SK-N-SH (cell line): ENCODE measurements at regions of chr3 and their contacts with region 1.

Region 1: GRCh38 chr3:50370594-50370993 is 11.3 kb upstream of the TMEM115 start:
- DNase-seq: peak; percentile 78
- H3K4me3 ChIP-seq: no peak overlapping the region
- H3K27ac ChIP-seq: peak overlapping the region in 1 of 2 experiments; percentile 56; a peak in 2 of 4 replicates
- H3K4me1 ChIP-seq: peaks cover 0 to 78% of the 10 kb centered on the region in 2 experiments; a peak in 2 of 4 replicates
- H3K27me3 ChIP-seq: no peaks in the 10 kb centered on the region
- CTCF ChIP-seq: peak; percentile 31
- EP300 ChIP-seq: no peak
- RAD21 ChIP-seq: peak; percentile 72

Region 2: DNA sequence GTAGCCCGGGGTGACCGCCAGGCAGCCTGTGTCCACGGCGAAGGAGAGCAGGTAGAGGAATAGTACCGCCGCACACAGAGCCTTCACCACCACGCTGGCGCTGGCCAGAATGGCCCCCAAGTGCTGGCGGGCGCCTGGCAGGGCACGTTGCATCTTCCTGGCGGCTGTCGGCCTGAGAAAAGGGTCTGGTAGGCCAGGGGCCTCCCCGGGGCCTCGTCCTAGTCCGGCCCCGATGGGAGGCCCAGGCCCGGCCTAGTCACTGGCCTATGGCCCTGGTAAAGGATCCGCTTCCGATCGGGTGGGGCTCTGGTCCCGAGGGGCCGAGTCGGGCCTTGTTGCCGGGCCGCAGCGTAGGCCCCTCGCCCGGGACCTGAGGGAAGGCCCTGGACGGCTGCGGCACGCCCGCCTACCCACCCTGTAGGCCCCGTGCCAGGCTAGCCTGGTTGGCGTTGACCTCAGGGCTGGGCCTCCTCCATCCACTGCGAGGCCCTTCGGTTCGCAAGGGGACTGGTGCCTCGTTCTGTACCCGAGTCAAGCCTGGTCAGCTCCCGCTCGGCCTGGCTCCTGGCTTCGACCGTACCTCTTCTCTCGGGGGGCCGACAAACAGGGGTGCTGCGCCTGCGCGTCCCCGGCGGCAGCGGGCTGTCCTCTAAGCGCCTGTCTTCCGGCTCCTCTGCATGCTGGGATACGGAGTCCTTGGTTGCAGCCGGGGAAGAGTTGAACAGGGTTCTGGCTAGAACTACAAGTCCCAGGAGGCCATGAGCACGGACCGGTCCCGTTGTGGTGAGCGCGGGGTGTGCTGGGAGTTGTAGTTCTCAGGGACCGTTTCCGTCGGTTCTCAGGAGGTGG is 11.5 kb before region 1 on chr3 and contains the start of gene TMEM115:
- CTCF ChIA-PET with region 1: interaction called, 10 read pairs
- POLR2A ChIA-PET with region 1: interaction called, 7 read pairs
- DNase-seq: peak; percentile 98
- H3K4me3 ChIP-seq: peak within 1 kb of the TSS; percentile 77 to 95
- H3K27ac ChIP-seq: peak within 1 kb of the TSS; percentile 60 to 84; a peak in 3 of 4 replicates
- H3K4me1 ChIP-seq: peaks cover 8 to 49% of the 10 kb centered on the region in 2 experiments; a peak in 2 of 4 replicates
- H3K27me3 ChIP-seq: no peaks in the 10 kb centered on the region
- CTCF ChIP-seq: no peak
- EP300 ChIP-seq: no peak; a peak in 1 of 4 replicates
- RAD21 ChIP-seq: no peak
- polyA plus RNA-seq, gene TMEM115: 47.8 and 49.2 TPM in 2 replicates

Region 3: GRCh38 chr3:50381383-50381782 is 10.8 kb after region 1 on chr3:
- CTCF ChIA-PET with region 1: interaction called, 70 read pairs
- POLR2A ChIA-PET with region 1: interaction called, 28 read pairs
- DNase-seq: peak; percentile 90
- H3K4me3 ChIP-seq: peak overlapping the region in 1 of 2 experiments; percentile 41; a peak in 1 of 4 replicates
- H3K27ac ChIP-seq: peak overlapping the region in 1 of 2 experiments; percentile 100; a peak in 2 of 4 replicates
- H3K4me1 ChIP-seq: peaks cover 0 to 98% of the 10 kb centered on the region in 2 experiments; a peak in 2 of 4 replicates
- H3K27me3 ChIP-seq: no peaks in the 10 kb centered on the region
- CTCF ChIP-seq: no peak
- EP300 ChIP-seq: peak in 1 of 2 experiments; percentile 97; a peak in 2 of 4 replicates
- RAD21 ChIP-seq: no peak; the same call in 1 of the 2 replicates

Region 4: GRCh38 chr3:50388016-50388719 is 17.6 kb after region 1 on chr3:
- CTCF ChIA-PET with region 1: interaction called, 70 read pairs
- POLR2A ChIA-PET with region 1: interaction called, 25 read pairs
- DNase-seq: peak; percentile 89
- H3K4me3 ChIP-seq: no peak overlapping the region
- H3K27ac ChIP-seq: peak overlapping the region in 1 of 2 experiments; percentile 100; a peak in 2 of 4 replicates
- H3K4me1 ChIP-seq: peaks cover 0 to 99% of the 10 kb centered on the region in 2 experiments; a peak in 2 of 4 replicates
- H3K27me3 ChIP-seq: no peaks in the 10 kb centered on the region
- CTCF ChIP-seq: peak; percentile 46
- EP300 ChIP-seq: peak in 1 of 2 experiments; percentile 86; a peak in 1 of 4 replicates
- RAD21 ChIP-seq: peak; percentile 73

Region 5: GRCh38 chr3:50550079-50550741 is 179.6 kb after region 1 on chr3:
- CTCF ChIA-PET with region 1: interaction called, 10 read pairs
- POLR2A ChIA-PET with region 1: no interaction called
- DNase-seq: peak; percentile 86
- H3K4me3 ChIP-seq: no peak overlapping the region; a peak in 1 of 4 replicates
- H3K27ac ChIP-seq: peak overlapping the region in 1 of 2 experiments; percentile 63; a peak in 2 of 4 replicates
- H3K4me1 ChIP-seq: peaks cover 0 to 45% of the 10 kb centered on the region in 2 experiments; a peak in 1 of 4 replicates
- H3K27me3 ChIP-seq: no peaks in the 10 kb centered on the region
- CTCF ChIP-seq: peak; percentile 64
- EP300 ChIP-seq: 0 out of 4 replicates have a peak, but pooled peaks of 1 of the 2 experiments have one; percentile 7
- RAD21 ChIP-seq: peak; percentile 80

Region 6: GRCh38 chr3:50714946-50715345 is 344.4 kb after region 1 on chr3:
- CTCF ChIA-PET with region 1: no interaction called
- POLR2A ChIA-PET with region 1: no interaction called
- DNase-seq: peak; percentile 45
- H3K4me3 ChIP-seq: no peak overlapping the region
- H3K27ac ChIP-seq: no peak overlapping the region; a peak in 1 of 4 replicates
- H3K4me1 ChIP-seq: no peaks in the 10 kb centered on the region
- H3K27me3 ChIP-seq: no peaks in the 10 kb centered on the region; the same call in 1 of the 2 replicates
- CTCF ChIP-seq: no peak
- EP300 ChIP-seq: no peak
- RAD21 ChIP-seq: no peak